GM10248 (cell line): ENCODE measurements at regions of chr10 and their contacts with region 1.

Region 1: GRCh38 chr10:110354322-110354766 is 49.6 kb upstream of the SMNDC1 start:
- DNase-seq: peak; percentile 66
- CTCF ChIP-seq: peak; percentile 78

Region 2: GRCh38 chr10:110326351-110327032 is 27.9 kb before region 1 on chr10:
- CTCF ChIA-PET with region 1: interaction called, 44 read pairs
- POLR2A ChIA-PET with region 1: no interaction called
- DNase-seq: peak; percentile 32
- CTCF ChIP-seq: no peak

Region 3: DNA sequence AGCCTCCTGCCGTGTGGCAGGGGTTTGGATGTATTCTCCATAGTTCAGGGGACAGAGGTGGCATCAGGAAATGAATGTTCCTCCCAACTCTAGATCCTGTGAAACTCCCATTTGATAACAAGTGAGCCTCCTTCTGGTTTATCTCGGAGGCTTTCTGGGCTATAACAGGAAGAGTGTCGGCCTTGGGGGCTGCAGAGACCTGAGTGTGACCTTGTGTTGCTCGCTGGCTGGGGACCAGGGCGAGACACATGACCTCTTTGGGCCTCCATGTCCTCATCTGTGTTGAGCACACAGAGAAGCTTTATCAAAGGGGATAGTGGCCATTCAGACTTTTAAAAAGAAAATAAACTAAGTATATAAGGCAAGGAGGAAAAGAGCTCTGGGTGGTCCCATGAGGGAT is 28.4 kb after region 1 on chr10:
- CTCF ChIA-PET with region 1: interaction called, 11 read pairs
- POLR2A ChIA-PET with region 1: no interaction called
- DNase-seq: no peak
- CTCF ChIP-seq: no peak

Region 4: GRCh38 chr10:110408203-110408751 is 53.9 kb after region 1 on chr10:
- CTCF ChIA-PET with region 1: interaction called, 25 read pairs
- POLR2A ChIA-PET with region 1: interaction called, 10 read pairs
- DNase-seq: no peak
- CTCF ChIP-seq: no peak

Region 5: GRCh38 chr10:110502851-110503301 is 148.5 kb after region 1 on chr10:
- CTCF ChIA-PET with region 1: interaction called, 37 read pairs
- POLR2A ChIA-PET with region 1: interaction called, 9 read pairs
- DNase-seq: peak; percentile 57
- CTCF ChIP-seq: no peak

Region 6: GRCh38 chr10:110547139-110547761 is 192.9 kb after region 1 on chr10:
- CTCF ChIA-PET with region 1: interaction called, 62 read pairs
- POLR2A ChIA-PET with region 1: no interaction called
- DNase-seq: peak; percentile 72
- CTCF ChIP-seq: peak; percentile 73

Region 7: DNA sequence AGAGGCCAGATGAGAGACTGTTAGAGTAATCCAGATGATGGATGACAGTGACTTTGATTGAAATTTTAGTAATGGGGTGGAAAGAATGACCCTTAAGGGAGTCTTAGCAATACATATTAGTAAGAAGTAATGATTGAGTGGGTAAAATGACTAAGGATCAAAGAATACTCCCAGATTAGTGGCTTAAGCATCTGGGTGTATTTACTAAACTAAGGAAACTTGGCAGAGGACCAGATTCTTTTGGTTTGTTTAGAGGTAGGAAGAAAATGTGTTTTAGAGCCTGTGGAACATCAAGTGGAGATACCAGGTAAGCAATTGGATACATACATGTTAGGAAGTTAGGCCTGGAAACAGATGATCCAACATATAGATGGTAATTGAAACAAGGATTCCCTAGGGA is 663.7 kb after region 1 on chr10:
- CTCF ChIA-PET with region 1: no interaction called
- POLR2A ChIA-PET with region 1: no interaction called
- DNase-seq: no peak
- CTCF ChIP-seq: no peak